ENCODE measurements at regions of chr9 and their contacts with region 1.

Region 1: GRCh38 chr9:104747558-104748358 is at the start of gene NIPSNAP3A:
- DNase-seq: peak; percentile 89 to 94 (median 92)
- ATAC-seq: peak; percentile 93
- H3K4me3 ChIP-seq: peak within 1 kb of the TSS; percentile 80
- H3K27ac ChIP-seq: peak within 1 kb of the TSS; percentile 89
- H3K4me1 ChIP-seq: peaks cover 13 to 26% of the 10 kb centered on the region in 2 experiments; a peak in 4 of 5 replicates
- H3K27me3 ChIP-seq: no peaks in the 10 kb centered on the region
- CTCF ChIP-seq: no peak; a peak in 1 of 6 replicates
- EP300 ChIP-seq: no peak
- POLR2A ChIP-seq: peak; percentile 76
- RAD21 ChIP-seq: no peak
- polyA plus RNA-seq, gene NIPSNAP3A: 126 to 132 TPM

Region 2: GRCh38 chr9:104093647-104094533 is 653.9 kb before region 1 on chr9 and contains the start of gene SMC2:
- CTCF ChIA-PET with region 1: no interaction called
- POLR2A ChIA-PET with region 1: interaction called, 5 read pairs
- in situ Hi-C with region 1: no loop called
- intact Hi-C with region 1: loop called (anchors 5 kb)
- DNase-seq: peak; percentile 88 to 93 (median 90)
- ATAC-seq: peak; percentile 90
- H3K4me3 ChIP-seq: peak within 1 kb of the TSS; percentile 61
- H3K27ac ChIP-seq: peak within 1 kb of the TSS; percentile 98
- H3K4me1 ChIP-seq: peaks cover 0 to 16% of the 10 kb centered on the region in 2 experiments; a peak in 3 of 5 replicates
- H3K27me3 ChIP-seq: no peaks in the 10 kb centered on the region
- CTCF ChIP-seq: no peak
- EP300 ChIP-seq: no peak
- POLR2A ChIP-seq: peak; percentile 97
- RAD21 ChIP-seq: no peak
- polyA plus RNA-seq, gene SMC2: 34.3 to 54.0 TPM

Region 3: GRCh38 chr9:104374711-104375110 is 373.0 kb before region 1 on chr9:
- CTCF ChIA-PET with region 1: no interaction called
- POLR2A ChIA-PET with region 1: no interaction called
- in situ Hi-C with region 1: no loop called
- intact Hi-C with region 1: loop called (anchors 5 kb)
- DNase-seq: no peak
- ATAC-seq: no peak
- H3K4me3 ChIP-seq: no peak overlapping the region
- H3K27ac ChIP-seq: no peak overlapping the region
- H3K4me1 ChIP-seq: no peaks in the 10 kb centered on the region
- H3K27me3 ChIP-seq: no peaks in the 10 kb centered on the region
- CTCF ChIP-seq: no peak
- EP300 ChIP-seq: no peak
- POLR2A ChIP-seq: no peak
- RAD21 ChIP-seq: no peak

Region 4: GRCh38 chr9:104482921-104483570 is 264.7 kb before region 1 on chr9:
- CTCF ChIA-PET with region 1: no interaction called
- POLR2A ChIA-PET with region 1: no interaction called
- in situ Hi-C with region 1: no loop called
- intact Hi-C with region 1: loop called (anchors 10 kb)
- DNase-seq: no peak
- ATAC-seq: no peak
- H3K4me3 ChIP-seq: no peak overlapping the region
- H3K27ac ChIP-seq: no peak overlapping the region
- H3K4me1 ChIP-seq: no peaks in the 10 kb centered on the region
- H3K27me3 ChIP-seq: no peaks in the 10 kb centered on the region
- CTCF ChIP-seq: no peak
- EP300 ChIP-seq: no peak
- POLR2A ChIP-seq: no peak
- RAD21 ChIP-seq: no peak

Region 5: DNA sequence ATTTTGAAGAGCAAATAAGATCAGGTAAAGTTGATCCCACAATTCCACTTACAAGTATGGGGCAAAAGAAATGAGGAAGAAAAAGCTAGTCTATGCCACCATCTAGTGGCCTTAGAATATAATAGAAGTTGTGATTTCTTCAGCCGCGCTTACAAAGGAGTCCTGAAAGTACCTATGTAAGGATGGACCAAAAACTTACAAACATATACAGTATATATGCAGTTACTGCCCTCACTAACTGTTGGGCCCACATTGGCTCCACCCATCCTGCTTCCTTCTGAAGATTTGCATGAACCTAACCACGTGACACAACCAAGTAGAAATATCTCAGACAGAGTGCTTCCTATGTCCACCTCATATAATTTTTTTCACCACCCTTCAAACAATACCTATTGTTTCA is 65.1 kb before region 1 on chr9:
- CTCF ChIA-PET with region 1: no interaction called
- POLR2A ChIA-PET with region 1: no interaction called
- in situ Hi-C with region 1: no loop called
- intact Hi-C with region 1: loop called (anchors 2 kb)
- DNase-seq: peak; percentile 13 to 64 (median 18)
- ATAC-seq: peak; percentile 85
- H3K4me3 ChIP-seq: no peak overlapping the region
- H3K27ac ChIP-seq: no peak overlapping the region
- H3K4me1 ChIP-seq: no peaks in the 10 kb centered on the region
- H3K27me3 ChIP-seq: no peaks in the 10 kb centered on the region
- CTCF ChIP-seq: peak; percentile 27 to 65 (median 44); a peak in 4 of 6 replicates
- EP300 ChIP-seq: no peak
- POLR2A ChIP-seq: no peak
- RAD21 ChIP-seq: peak; percentile 77 to 86

Region 6: GRCh38 chr9:104774831-104775573 is 27.2 kb after region 1 on chr9:
- CTCF ChIA-PET with region 1: no interaction called
- POLR2A ChIA-PET with region 1: interaction called, 3 read pairs
- in situ Hi-C with region 1: no loop called
- intact Hi-C with region 1: loop called (anchors 2 kb)
- DNase-seq: peak; percentile 20 to 90 (median 52)
- ATAC-seq: peak; percentile 92
- H3K4me3 ChIP-seq: no peak overlapping the region
- H3K27ac ChIP-seq: peak overlapping the region; percentile 79
- H3K4me1 ChIP-seq: peaks cover 9 to 22% of the 10 kb centered on the region in 2 experiments
- H3K27me3 ChIP-seq: no peaks in the 10 kb centered on the region
- CTCF ChIP-seq: no peak
- EP300 ChIP-seq: peak; percentile 88
- POLR2A ChIP-seq: no peak
- RAD21 ChIP-seq: 0 out of 4 replicates have a peak, but pooled peaks of 1 of the 2 experiments have one; percentile 6